PC-9 (cell line): ENCODE measurements at regions of chr6 and their contacts with region 1.

Region 1: DNA sequence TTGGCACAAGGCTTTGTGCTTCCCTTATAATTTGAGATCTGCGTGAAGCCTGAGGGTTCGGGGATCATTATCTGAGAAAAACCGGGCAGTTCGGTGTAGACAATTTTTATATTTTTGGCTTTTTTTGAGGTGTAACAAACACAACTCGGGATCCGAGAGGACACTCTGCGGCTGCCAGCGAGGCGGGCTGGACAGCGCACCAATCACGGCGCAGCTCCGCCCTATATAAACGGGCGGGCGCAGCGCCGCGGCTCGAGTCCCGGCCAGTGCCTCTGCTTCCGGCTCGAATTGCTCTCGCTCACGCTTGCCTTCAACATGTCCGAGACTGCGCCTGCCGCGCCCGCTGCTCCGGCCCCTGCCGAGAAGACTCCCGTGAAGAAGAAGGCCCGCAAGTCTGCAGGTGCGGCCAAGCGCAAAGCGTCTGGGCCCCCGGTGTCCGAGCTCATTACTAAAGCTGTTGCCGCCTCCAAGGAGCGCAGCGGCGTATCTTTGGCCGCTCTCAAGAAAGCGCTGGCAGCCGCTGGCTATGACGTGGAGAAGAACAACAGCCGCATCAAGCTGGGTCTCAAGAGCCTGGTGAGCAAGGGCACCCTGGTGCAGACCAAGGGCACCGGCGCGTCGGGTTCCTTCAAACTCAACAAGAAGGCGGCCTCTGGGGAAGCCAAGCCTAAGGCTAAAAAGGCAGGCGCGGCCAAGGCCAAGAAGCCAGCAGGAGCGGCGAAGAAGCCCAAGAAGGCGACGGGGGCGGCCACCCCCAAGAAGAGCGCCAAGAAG is 69.0 kb downstream of the HFE start:
- DNase-seq: peak; percentile 71 to 90
- H3K4me3 ChIP-seq: peak overlapping the region; percentile 87
- H3K27ac ChIP-seq: peak overlapping the region; percentile 85
- H3K4me1 ChIP-seq: peaks cover 14% of the 10 kb centered on the region
- H3K27me3 ChIP-seq: no peaks in the 10 kb centered on the region
- CTCF ChIP-seq: no peak; the same call in 1 of the 2 replicates

Region 2: DNA sequence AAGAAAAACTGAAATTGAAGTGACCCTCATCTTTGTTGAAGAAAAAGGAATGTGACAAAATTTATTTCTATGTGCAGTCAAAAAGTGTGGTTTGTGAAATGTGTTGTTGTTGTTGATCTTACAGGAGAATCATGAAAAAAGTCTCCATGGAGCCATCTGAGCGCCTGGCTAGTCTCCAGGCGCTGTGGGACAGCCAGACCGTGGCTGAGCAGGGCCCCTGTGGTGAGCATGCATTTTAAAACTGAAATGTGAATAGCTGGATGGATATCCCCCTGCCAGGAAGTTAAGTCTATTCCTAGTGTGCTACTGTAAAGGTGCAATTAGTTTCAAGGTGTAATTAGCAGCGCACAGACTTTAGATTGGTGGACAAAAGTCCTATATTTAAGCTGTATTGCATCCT is 706.5 kb before region 1 on chr6:
- CTCF ChIA-PET with region 1: no interaction called
- POLR2A ChIA-PET with region 1: no interaction called
- intact Hi-C with region 1: no loop called
- DNase-seq: no peak
- H3K4me3 ChIP-seq: no peak overlapping the region
- H3K27ac ChIP-seq: 0 out of 2 replicates have a peak overlapping the region, but pooled peaks have one; percentile 11
- H3K4me1 ChIP-seq: no peaks in the 10 kb centered on the region
- H3K27me3 ChIP-seq: no peaks in the 10 kb centered on the region
- CTCF ChIP-seq: no peak

Region 3: GRCh38 chr6:26054857-26055669 is 101.2 kb before region 1 on chr6:
- CTCF ChIA-PET with region 1: no interaction called
- POLR2A ChIA-PET with region 1: interaction called, 29 read pairs
- intact Hi-C with region 1: no loop called
- DNase-seq: peak; percentile 79 to 94
- H3K4me3 ChIP-seq: peak overlapping the region; percentile 79
- H3K27ac ChIP-seq: peak overlapping the region; percentile 95
- H3K4me1 ChIP-seq: peaks cover 26% of the 10 kb centered on the region
- H3K27me3 ChIP-seq: no peaks in the 10 kb centered on the region
- CTCF ChIP-seq: 0 out of 2 replicates have a peak, but pooled peaks have one; percentile 16

Region 4: GRCh38 chr6:26122793-26123674 is 33.2 kb before region 1 on chr6:
- CTCF ChIA-PET with region 1: interaction called, 11 read pairs
- POLR2A ChIA-PET with region 1: interaction called, 284 read pairs
- intact Hi-C with region 1: loop called (anchors 1 kb)
- DNase-seq: peak; percentile 91 to 98
- H3K4me3 ChIP-seq: peak overlapping the region; percentile 86
- H3K27ac ChIP-seq: peak overlapping the region; percentile 78
- H3K4me1 ChIP-seq: peaks cover 22% of the 10 kb centered on the region
- H3K27me3 ChIP-seq: no peaks in the 10 kb centered on the region
- CTCF ChIP-seq: no peak

Region 5: DNA sequence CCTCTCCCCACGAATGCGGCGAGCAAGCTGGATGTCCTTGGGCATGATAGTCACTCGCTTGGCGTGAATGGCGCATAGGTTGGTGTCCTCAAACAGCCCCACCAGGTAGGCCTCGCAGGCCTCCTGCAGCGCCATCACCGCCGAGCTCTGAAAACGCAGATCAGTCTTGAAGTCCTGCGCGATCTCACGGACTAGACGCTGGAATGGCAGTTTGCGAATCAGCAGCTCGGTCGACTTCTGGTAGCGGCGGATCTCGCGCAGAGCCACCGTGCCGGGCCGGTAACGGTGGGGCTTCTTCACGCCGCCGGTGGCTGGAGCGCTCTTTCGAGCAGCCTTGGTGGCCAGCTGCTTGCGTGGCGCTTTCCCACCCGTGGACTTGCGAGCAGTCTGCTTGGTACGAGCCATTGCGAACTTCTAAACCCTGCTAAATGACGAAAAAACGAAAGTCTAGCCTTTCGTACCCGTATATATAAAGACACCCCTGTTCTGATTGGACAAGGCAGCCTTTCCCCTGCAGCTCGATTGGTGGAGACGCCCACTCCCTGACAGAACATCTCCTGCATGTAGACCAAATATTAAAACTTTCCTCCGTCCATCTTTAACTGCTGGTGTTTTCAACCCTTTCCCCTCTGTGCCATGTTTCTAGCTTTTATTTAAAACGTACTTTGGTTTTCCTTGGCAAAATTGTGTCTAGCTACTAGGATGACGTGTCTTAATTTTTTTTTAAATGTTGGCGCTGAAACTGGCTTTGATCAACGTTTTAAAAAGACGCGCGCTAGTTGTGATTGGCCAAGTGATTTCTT is 40.8 kb after region 1 on chr6:
- CTCF ChIA-PET with region 1: no interaction called
- POLR2A ChIA-PET with region 1: interaction called, 40 read pairs
- intact Hi-C with region 1: loop called (anchors 1 kb)
- DNase-seq: peak; percentile 55 to 66
- H3K4me3 ChIP-seq: peak overlapping the region; percentile 77
- H3K27ac ChIP-seq: peak overlapping the region; percentile 85
- H3K4me1 ChIP-seq: peaks cover 11% of the 10 kb centered on the region; the same call in 1 of the 2 replicates
- H3K27me3 ChIP-seq: no peaks in the 10 kb centered on the region
- CTCF ChIP-seq: no peak

Region 6: GRCh38 chr6:26223650-26224546 is 67.6 kb after region 1 on chr6:
- CTCF ChIA-PET with region 1: no interaction called
- POLR2A ChIA-PET with region 1: interaction called, 26 read pairs
- intact Hi-C with region 1: no loop called
- DNase-seq: peak; percentile 71 to 96
- H3K4me3 ChIP-seq: peak overlapping the region; percentile 96
- H3K27ac ChIP-seq: peak overlapping the region; percentile 96
- H3K4me1 ChIP-seq: peaks cover 18% of the 10 kb centered on the region
- H3K27me3 ChIP-seq: no peaks in the 10 kb centered on the region
- CTCF ChIP-seq: no peak

Region 7: GRCh38 chr6:26421259-26422144 is 265.2 kb after region 1 on chr6:
- CTCF ChIA-PET with region 1: no interaction called
- POLR2A ChIA-PET with region 1: no interaction called
- intact Hi-C with region 1: no loop called
- DNase-seq: peak; percentile 72 to 80
- H3K4me3 ChIP-seq: peak overlapping the region; percentile 67
- H3K27ac ChIP-seq: 0 out of 2 replicates have a peak overlapping the region, but pooled peaks have one; percentile 53
- H3K4me1 ChIP-seq: peaks cover 6% of the 10 kb centered on the region; the same call in 1 of the 2 replicates
- H3K27me3 ChIP-seq: no peaks in the 10 kb centered on the region
- CTCF ChIP-seq: no peak

Region 8: GRCh38 chr6:26473758-26474438 is 317.6 kb after region 1 on chr6:
- CTCF ChIA-PET with region 1: no interaction called
- POLR2A ChIA-PET with region 1: interaction called, 10 read pairs
- intact Hi-C with region 1: no loop called
- DNase-seq: peak; percentile 75 to 88
- H3K4me3 ChIP-seq: peak overlapping the region; percentile 62
- H3K27ac ChIP-seq: peak overlapping the region; percentile 76
- H3K4me1 ChIP-seq: peaks cover 29% of the 10 kb centered on the region
- H3K27me3 ChIP-seq: no peaks in the 10 kb centered on the region
- CTCF ChIP-seq: no peak

Region 9: DNA sequence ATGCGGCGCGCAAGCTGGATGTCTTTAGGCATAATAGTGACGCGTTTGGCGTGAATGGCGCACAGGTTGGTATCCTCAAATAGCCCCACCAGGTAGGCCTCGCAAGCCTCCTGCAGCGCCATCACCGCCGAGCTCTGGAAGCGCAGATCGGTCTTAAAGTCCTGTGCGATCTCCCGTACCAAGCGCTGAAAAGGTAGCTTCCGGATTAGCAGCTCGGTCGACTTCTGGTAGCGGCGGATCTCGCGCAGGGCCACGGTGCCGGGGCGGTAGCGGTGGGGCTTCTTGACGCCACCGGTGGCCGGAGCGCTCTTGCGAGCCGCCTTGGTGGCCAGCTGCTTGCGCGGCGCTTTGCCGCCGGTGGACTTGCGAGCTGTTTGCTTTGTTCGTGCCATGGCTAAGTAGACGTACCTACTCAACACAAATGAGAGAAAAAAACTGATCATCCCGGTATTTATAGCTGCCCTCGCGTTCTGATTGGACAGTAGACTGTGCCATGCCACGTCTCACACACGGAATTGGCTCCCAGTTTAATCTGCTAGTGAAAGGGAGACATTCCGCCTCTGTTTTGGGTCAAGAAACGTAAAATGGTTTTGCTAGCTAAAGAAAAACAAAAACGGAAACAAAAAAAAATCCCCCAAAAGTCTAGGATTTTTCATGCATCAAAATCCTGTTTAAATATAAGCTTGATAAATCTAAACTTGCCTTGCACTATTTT is 1715.8 kb after region 1 on chr6:
- CTCF ChIA-PET with region 1: no interaction called
- POLR2A ChIA-PET with region 1: interaction called, 10 read pairs
- intact Hi-C with region 1: no loop called
- DNase-seq: peak; percentile 83 to 85
- H3K4me3 ChIP-seq: peak overlapping the region; percentile 67
- H3K27ac ChIP-seq: peak overlapping the region; percentile 70
- H3K4me1 ChIP-seq: peaks cover 7% of the 10 kb centered on the region; the same call in 1 of the 2 replicates
- H3K27me3 ChIP-seq: no peaks in the 10 kb centered on the region
- CTCF ChIP-seq: peak; percentile 36; the same call in 1 of the 2 replicates